A673 (cell line): ENCODE measurements at regions of chr11 and their contacts with region 1.

Region 1: DNA sequence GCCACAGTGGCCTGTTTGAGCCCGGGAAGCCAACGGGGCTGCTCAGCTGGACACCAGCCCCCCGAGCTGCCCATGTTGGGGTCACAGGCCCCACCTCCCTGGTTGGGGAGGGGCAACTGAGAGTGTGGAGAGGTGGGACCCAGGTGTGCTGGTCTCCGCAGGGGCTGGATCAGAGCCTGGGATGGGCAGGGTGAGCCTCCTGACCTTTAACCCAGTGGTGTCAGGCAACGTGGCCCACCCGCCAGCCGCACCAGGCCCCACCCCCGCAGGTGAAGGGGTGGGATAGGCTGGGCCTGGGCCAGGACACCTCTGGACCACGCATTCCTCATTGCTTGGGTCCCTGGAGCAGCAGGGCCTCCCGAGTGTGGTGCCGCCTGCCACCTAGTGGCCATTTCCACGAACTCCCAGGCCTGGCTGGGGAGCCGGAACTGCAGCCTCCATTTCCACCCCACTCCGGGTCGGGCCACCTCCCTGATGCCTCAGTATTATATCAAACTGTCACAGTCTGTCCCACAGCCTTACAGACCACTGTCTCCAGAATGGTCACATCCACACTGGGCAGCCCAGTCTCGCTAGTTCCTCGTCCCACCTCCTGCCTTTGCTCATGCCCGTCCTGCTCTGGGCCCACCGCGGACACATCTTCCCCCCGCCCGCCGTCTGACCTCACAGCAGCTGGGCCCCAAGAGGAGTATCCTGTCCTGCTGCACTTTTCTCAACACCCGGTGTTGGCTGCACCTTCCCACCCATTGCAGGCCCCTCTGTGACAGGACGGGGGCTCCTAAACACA is 13.3 kb upstream of the PPP6R3 start:
- DNase-seq: peak; percentile 87
- H3K4me3 ChIP-seq: no peak overlapping the region
- H3K27ac ChIP-seq: no peak overlapping the region
- H3K4me1 ChIP-seq: peaks cover 10% of the 10 kb centered on the region
- H3K27me3 ChIP-seq: no peaks in the 10 kb centered on the region
- CTCF ChIP-seq: peak; percentile 97

Region 2: GRCh38 chr11:68383976-68384501 is 63.2 kb before region 1 on chr11:
- CTCF ChIA-PET with region 1: no interaction called
- POLR2A ChIA-PET with region 1: no interaction called
- intact Hi-C with region 1: no loop called
- DNase-seq: peak; percentile 66
- H3K4me3 ChIP-seq: no peak overlapping the region
- H3K27ac ChIP-seq: no peak overlapping the region
- H3K4me1 ChIP-seq: no peaks in the 10 kb centered on the region
- H3K27me3 ChIP-seq: no peaks in the 10 kb centered on the region
- CTCF ChIP-seq: peak; percentile 100

Region 3: GRCh38 chr11:68402355-68403031 is 44.7 kb before region 1 on chr11:
- CTCF ChIA-PET with region 1: no interaction called
- POLR2A ChIA-PET with region 1: no interaction called
- intact Hi-C with region 1: loop called (anchors 1 kb)
- DNase-seq: peak; percentile 40
- H3K4me3 ChIP-seq: no peak overlapping the region
- H3K27ac ChIP-seq: no peak overlapping the region
- H3K4me1 ChIP-seq: peaks cover 5% of the 10 kb centered on the region
- H3K27me3 ChIP-seq: no peaks in the 10 kb centered on the region
- CTCF ChIP-seq: peak; percentile 42; the same call in 1 of the 2 replicates

Region 4: GRCh38 chr11:68412593-68413475 is 34.4 kb before region 1 on chr11:
- CTCF ChIA-PET with region 1: no interaction called
- POLR2A ChIA-PET with region 1: no interaction called
- intact Hi-C with region 1: no loop called
- DNase-seq: no peak
- H3K4me3 ChIP-seq: no peak overlapping the region
- H3K27ac ChIP-seq: no peak overlapping the region
- H3K4me1 ChIP-seq: no peaks in the 10 kb centered on the region
- H3K27me3 ChIP-seq: no peaks in the 10 kb centered on the region
- CTCF ChIP-seq: no peak